HCT116 (cell line): ENCODE measurements at regions of chr5 and their contacts with region 1.

Region 1: GRCh38 chr5:73215891-73216610 is 43.1 kb downstream of the TMEM174 start:
- DNase-seq: peak; percentile 72
- ATAC-seq: peak; percentile 92
- H3K4me3 ChIP-seq: peak overlapping the region; percentile 30 to 53
- H3K27ac ChIP-seq: peak overlapping the region; percentile 41; the same call in 1 of the 2 replicates
- H3K4me1 ChIP-seq: peaks cover 8 to 32% of the 10 kb centered on the region in 2 experiments; a peak in 3 of 4 replicates
- H3K27me3 ChIP-seq: no peaks in the 10 kb centered on the region
- CTCF ChIP-seq: peak; percentile 76 to 93 (median 82)
- POLR2A ChIP-seq: no peak
- RAD21 ChIP-seq: peak; percentile 76

Region 2: GRCh38 chr5:72723581-72723980 is 492.5 kb before region 1 on chr5:
- CTCF ChIA-PET with region 1: no interaction called
- POLR2A ChIA-PET with region 1: no interaction called
- RAD21 ChIA-PET with region 1: no interaction called
- intact Hi-C with region 1: no loop called
- DNase-seq: no peak
- ATAC-seq: no peak
- H3K4me3 ChIP-seq: no peak overlapping the region
- H3K27ac ChIP-seq: no peak overlapping the region
- H3K4me1 ChIP-seq: no peaks in the 10 kb centered on the region
- H3K27me3 ChIP-seq: no peaks in the 10 kb centered on the region
- CTCF ChIP-seq: no peak
- POLR2A ChIP-seq: no peak
- RAD21 ChIP-seq: no peak

Region 3: DNA sequence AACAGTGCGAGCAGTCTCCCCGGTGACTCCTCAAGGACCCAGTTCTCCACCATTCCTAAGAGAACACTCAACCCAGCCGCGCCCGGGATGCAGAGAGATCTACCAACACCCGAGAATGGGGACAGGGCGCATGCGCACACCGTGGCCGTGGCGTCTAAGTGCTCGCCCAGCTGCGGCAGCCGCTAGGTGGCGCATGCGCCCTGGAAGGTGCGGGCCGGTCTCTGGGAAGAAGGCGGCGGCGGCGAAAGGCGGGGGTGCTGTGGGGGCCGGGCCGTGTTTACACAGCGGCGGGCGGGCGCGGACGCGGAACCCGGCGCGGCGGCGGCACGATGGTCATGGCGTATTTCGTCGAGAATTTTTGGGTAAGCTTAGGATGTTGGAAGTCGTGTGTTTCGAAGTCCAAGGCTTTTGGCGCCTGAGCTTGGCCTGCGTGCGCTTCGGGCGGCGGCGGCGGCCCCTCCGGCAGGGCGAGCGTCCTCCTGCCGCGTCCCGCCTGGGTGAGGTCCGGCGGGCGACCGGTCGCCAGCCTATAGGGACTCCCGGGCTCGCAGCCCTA is 260.2 kb before region 1 on chr5 and contains the start of gene FCHO2:
- CTCF ChIA-PET with region 1: no interaction called
- POLR2A ChIA-PET with region 1: no interaction called
- RAD21 ChIA-PET with region 1: no interaction called
- intact Hi-C with region 1: loop called (anchors 10 kb)
- DNase-seq: peak; percentile 94
- ATAC-seq: peak; percentile 87
- H3K4me3 ChIP-seq: peak within 1 kb of the TSS; percentile 61 to 77
- H3K27ac ChIP-seq: peak within 1 kb of the TSS; percentile 92
- H3K4me1 ChIP-seq: peaks cover 22 to 55% of the 10 kb centered on the region in 2 experiments
- H3K27me3 ChIP-seq: no peaks in the 10 kb centered on the region
- CTCF ChIP-seq: peak; percentile 50 to 77 (median 72); a peak in 5 of 6 replicates
- POLR2A ChIP-seq: peak; percentile 70
- RAD21 ChIP-seq: peak; percentile 80
- total RNA-seq, gene FCHO2: 18.7 TPM

Region 4: GRCh38 chr5:73189871-73190376 is 26.1 kb before region 1 on chr5:
- CTCF ChIA-PET with region 1: interaction called, 15 read pairs
- POLR2A ChIA-PET with region 1: no interaction called
- RAD21 ChIA-PET with region 1: no interaction called
- intact Hi-C with region 1: no loop called
- DNase-seq: no peak
- ATAC-seq: no peak
- H3K4me3 ChIP-seq: no peak overlapping the region
- H3K27ac ChIP-seq: no peak overlapping the region
- H3K4me1 ChIP-seq: no peaks in the 10 kb centered on the region
- H3K27me3 ChIP-seq: no peaks in the 10 kb centered on the region
- CTCF ChIP-seq: no peak
- POLR2A ChIP-seq: no peak
- RAD21 ChIP-seq: no peak

Region 5: GRCh38 chr5:73448463-73449136 is 232.5 kb after region 1 on chr5 and contains the start of gene FOXD1:
- CTCF ChIA-PET with region 1: interaction called, 23 read pairs
- POLR2A ChIA-PET with region 1: interaction called, 8 read pairs
- RAD21 ChIA-PET with region 1: interaction called in 1 of 2 experiments, 9 read pairs
- intact Hi-C with region 1: no loop called
- DNase-seq: peak; percentile 92
- ATAC-seq: peak; percentile 88
- H3K4me3 ChIP-seq: peak within 1 kb of the TSS; percentile 64 to 67
- H3K27ac ChIP-seq: peak within 1 kb of the TSS; percentile 89
- H3K4me1 ChIP-seq: peaks cover 12 to 29% of the 10 kb centered on the region in 2 experiments; a peak in 3 of 4 replicates
- H3K27me3 ChIP-seq: no peaks in the 10 kb centered on the region
- CTCF ChIP-seq: no peak
- POLR2A ChIP-seq: peak; percentile 67
- RAD21 ChIP-seq: no peak
- total RNA-seq, gene FOXD1: 26.8 TPM